GM10248 (cell line): ENCODE measurements at regions of chr3 and their contacts with region 1.

Region 1: DNA sequence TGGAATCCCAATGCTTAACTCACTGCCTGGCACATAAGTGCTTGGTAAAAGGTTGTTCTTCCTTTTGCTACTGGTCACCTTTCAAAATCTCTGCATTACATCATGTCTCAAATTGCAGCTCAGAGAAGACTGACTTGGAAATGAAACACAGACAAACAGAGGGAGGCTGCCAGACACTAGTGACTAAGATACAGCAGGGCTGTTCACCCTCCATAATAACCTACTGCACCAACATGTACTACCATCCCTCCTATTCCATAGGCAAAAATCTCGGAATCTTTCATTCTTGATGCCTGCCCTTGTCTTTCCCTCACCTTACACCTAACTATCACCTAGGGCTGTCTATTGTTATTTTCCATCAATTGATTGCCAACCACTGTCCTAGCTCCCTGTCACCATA is 502.3 kb upstream of the ADAMTS9 start:
- DNase-seq: no peak
- CTCF ChIP-seq: no peak

Region 2: GRCh38 chr3:64936556-64936955 is 253.6 kb before region 1 on chr3:
- CTCF ChIA-PET with region 1: no interaction called
- POLR2A ChIA-PET with region 1: no interaction called
- DNase-seq: no peak
- CTCF ChIP-seq: no peak

Region 3: DNA sequence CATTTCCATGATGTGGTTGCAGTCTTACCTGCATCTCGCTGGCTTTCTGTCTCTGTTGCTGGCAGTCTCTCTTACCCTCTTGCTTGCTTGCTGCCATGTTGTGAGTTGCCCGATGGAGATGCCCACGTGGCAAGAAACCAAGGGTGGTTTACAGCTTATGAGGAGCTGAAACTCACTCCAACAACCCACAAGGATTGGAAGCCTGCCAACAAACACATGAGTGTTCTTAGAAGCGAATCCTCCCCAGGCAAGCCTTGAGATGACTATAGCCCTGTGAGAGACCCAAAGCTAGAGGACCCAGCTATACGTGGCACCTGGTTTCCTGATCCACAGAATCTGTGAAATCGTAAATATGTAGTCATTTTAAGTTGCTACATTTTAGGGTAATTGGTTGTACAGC is 11.4 kb before region 1 on chr3:
- CTCF ChIA-PET with region 1: interaction called, 14 read pairs
- POLR2A ChIA-PET with region 1: no interaction called
- DNase-seq: no peak
- CTCF ChIP-seq: no peak

Region 4: GRCh38 chr3:65702202-65702601 is 512.1 kb after region 1 on chr3:
- CTCF ChIA-PET with region 1: no interaction called
- POLR2A ChIA-PET with region 1: no interaction called
- DNase-seq: no peak
- CTCF ChIP-seq: no peak